ENCODE measurements at regions of chr16 and their contacts with region 1.

Region 1: GRCh38 chr16:74666425-74667254 is at the start of gene RFWD3:
- DNase-seq: peak; percentile 91 to 99 (median 94)
- ATAC-seq: peak; percentile 99
- H3K4me3 ChIP-seq: peak within 1 kb of the TSS; percentile 93
- H3K4me3 Mint-ChIP-seq: peak within 1 kb of the TSS; percentile 99
- H3K27ac ChIP-seq: peak within 1 kb of the TSS; percentile 69 to 72
- H3K27ac Mint-ChIP-seq: peak within 1 kb of the TSS; percentile 95
- H3K4me1 ChIP-seq: peaks cover 38% of the 10 kb centered on the region
- H3K4me1 Mint-ChIP-seq: peaks cover 44% of the 10 kb centered on the region
- H3K27me3 ChIP-seq: no peaks in the 10 kb centered on the region
- H3K27me3 Mint-ChIP-seq: no peaks in the 10 kb centered on the region
- CTCF ChIP-seq: no peak
- total RNA-seq, gene RFWD3: 44.9 to 47.0 TPM

Region 2: GRCh38 chr16:74372953-74373846 is 293.4 kb before region 1 on chr16:
- CTCF ChIA-PET with region 1: no interaction called
- POLR2A ChIA-PET with region 1: no interaction called
- intact Hi-C with region 1: loop called in 1 of 2 experiments (anchors 5 kb)
- DNase-seq: no peak
- ATAC-seq: no peak
- H3K4me3 ChIP-seq: no peak overlapping the region
- H3K4me3 Mint-ChIP-seq: no peak overlapping the region
- H3K27ac ChIP-seq: no peak overlapping the region
- H3K27ac Mint-ChIP-seq: peak overlapping the region; percentile 69
- H3K4me1 ChIP-seq: peaks cover 7% of the 10 kb centered on the region
- H3K4me1 Mint-ChIP-seq: peaks cover 8% of the 10 kb centered on the region
- H3K27me3 ChIP-seq: no peaks in the 10 kb centered on the region
- H3K27me3 Mint-ChIP-seq: no peaks in the 10 kb centered on the region
- CTCF ChIP-seq: no peak

Region 3: GRCh38 chr16:74521691-74522090 is 144.9 kb before region 1 on chr16:
- CTCF ChIA-PET with region 1: no interaction called
- POLR2A ChIA-PET with region 1: no interaction called
- intact Hi-C with region 1: no loop called
- DNase-seq: no peak
- ATAC-seq: no peak
- H3K4me3 ChIP-seq: no peak overlapping the region
- H3K4me3 Mint-ChIP-seq: no peak overlapping the region
- H3K27ac ChIP-seq: no peak overlapping the region
- H3K27ac Mint-ChIP-seq: peak overlapping the region; percentile 22
- H3K4me1 ChIP-seq: no peaks in the 10 kb centered on the region
- H3K4me1 Mint-ChIP-seq: peaks cover 54% of the 10 kb centered on the region
- H3K27me3 ChIP-seq: no peaks in the 10 kb centered on the region
- H3K27me3 Mint-ChIP-seq: no peaks in the 10 kb centered on the region
- CTCF ChIP-seq: no peak

Region 4: GRCh38 chr16:74563828-74564263 is 102.8 kb before region 1 on chr16:
- CTCF ChIA-PET with region 1: no interaction called
- POLR2A ChIA-PET with region 1: no interaction called
- intact Hi-C with region 1: no loop called
- DNase-seq: peak in 4 of 14 experiments; percentile 11 to 58 (median 35)
- ATAC-seq: no peak
- H3K4me3 ChIP-seq: no peak overlapping the region
- H3K4me3 Mint-ChIP-seq: peak overlapping the region; percentile 17
- H3K27ac ChIP-seq: no peak overlapping the region
- H3K27ac Mint-ChIP-seq: peak overlapping the region; percentile 87
- H3K4me1 ChIP-seq: peaks cover 45% of the 10 kb centered on the region
- H3K4me1 Mint-ChIP-seq: peaks cover 96% of the 10 kb centered on the region
- H3K27me3 ChIP-seq: no peaks in the 10 kb centered on the region
- H3K27me3 Mint-ChIP-seq: no peaks in the 10 kb centered on the region
- CTCF ChIP-seq: no peak

Region 5: GRCh38 chr16:74695450-74696422 is 29.1 kb after region 1 on chr16:
- CTCF ChIA-PET with region 1: interaction called, 4 read pairs
- POLR2A ChIA-PET with region 1: interaction called, 34 read pairs
- intact Hi-C with region 1: loop called (anchors 5 kb)
- DNase-seq: peak; percentile 24 to 89 (median 42)
- ATAC-seq: peak; percentile 73
- H3K4me3 ChIP-seq: peak overlapping the region; percentile 39
- H3K4me3 Mint-ChIP-seq: peak overlapping the region; percentile 89
- H3K27ac ChIP-seq: no peak overlapping the region
- H3K27ac Mint-ChIP-seq: peak overlapping the region; percentile 75
- H3K4me1 ChIP-seq: peaks cover 44% of the 10 kb centered on the region
- H3K4me1 Mint-ChIP-seq: peaks cover 71% of the 10 kb centered on the region
- H3K27me3 ChIP-seq: no peaks in the 10 kb centered on the region
- H3K27me3 Mint-ChIP-seq: no peaks in the 10 kb centered on the region
- CTCF ChIP-seq: no peak

Region 6: DNA sequence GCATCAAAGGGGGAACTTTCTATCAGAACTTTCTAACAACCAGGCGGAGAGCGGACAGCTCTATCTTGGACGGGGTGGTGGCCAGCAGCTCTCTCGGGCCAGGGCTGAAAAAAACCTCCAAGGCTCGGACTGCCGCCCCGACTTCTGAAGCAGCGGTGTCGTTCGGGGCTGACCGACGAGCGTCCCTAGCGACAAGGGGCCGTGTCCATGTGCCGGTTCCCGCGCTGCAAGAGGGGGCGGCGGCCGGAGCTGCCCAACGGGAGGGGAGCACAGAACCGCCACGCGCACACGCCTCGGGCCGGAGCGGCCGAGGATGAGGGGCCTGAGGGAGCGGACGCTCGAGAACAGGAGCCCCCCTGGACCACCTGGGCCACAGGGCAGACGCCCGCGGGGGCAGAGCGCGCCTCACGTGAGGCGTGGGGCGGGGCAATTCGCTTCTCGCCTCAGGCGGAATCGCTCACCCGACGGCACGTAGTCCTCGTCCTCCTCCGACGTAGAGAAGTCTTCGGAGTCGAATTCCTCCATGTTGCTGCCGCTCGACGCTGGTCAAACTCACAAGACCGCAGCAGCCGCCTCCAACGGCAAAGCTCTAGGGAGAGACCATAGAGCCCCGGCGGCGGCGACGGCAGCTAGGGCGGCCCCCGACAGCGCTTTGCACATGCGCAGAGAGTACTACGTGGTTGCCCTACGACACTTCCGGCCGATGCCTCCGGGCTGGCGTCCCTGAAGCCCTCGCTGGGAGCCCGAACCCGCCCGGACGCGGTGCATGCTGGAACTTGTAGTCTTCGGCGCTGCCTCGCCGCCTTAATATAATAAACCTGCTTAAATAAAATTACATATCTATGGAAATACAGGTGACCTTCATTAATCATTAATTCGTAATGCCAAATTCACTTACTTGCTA is 766.4 kb after region 1 on chr16 and contains the start of gene CFDP1:
- CTCF ChIA-PET with region 1: no interaction called
- POLR2A ChIA-PET with region 1: interaction called, 5 read pairs
- intact Hi-C with region 1: loop called in 1 of 2 experiments (anchors 10 kb)
- DNase-seq: peak; percentile 92 to 98 (median 94)
- ATAC-seq: peak; percentile 79
- H3K4me3 ChIP-seq: peak within 1 kb of the TSS; percentile 83
- H3K4me3 Mint-ChIP-seq: peak within 1 kb of the TSS; percentile 94
- H3K27ac ChIP-seq: peak within 1 kb of the TSS; percentile 96 to 97
- H3K27ac Mint-ChIP-seq: peak within 1 kb of the TSS; percentile 96
- H3K4me1 ChIP-seq: peaks cover 33% of the 10 kb centered on the region
- H3K4me1 Mint-ChIP-seq: peaks cover 28% of the 10 kb centered on the region
- H3K27me3 ChIP-seq: no peaks in the 10 kb centered on the region
- H3K27me3 Mint-ChIP-seq: no peaks in the 10 kb centered on the region
- CTCF ChIP-seq: no peak
- total RNA-seq, gene CFDP1: 23.0 to 25.5 TPM

Region 7: DNA sequence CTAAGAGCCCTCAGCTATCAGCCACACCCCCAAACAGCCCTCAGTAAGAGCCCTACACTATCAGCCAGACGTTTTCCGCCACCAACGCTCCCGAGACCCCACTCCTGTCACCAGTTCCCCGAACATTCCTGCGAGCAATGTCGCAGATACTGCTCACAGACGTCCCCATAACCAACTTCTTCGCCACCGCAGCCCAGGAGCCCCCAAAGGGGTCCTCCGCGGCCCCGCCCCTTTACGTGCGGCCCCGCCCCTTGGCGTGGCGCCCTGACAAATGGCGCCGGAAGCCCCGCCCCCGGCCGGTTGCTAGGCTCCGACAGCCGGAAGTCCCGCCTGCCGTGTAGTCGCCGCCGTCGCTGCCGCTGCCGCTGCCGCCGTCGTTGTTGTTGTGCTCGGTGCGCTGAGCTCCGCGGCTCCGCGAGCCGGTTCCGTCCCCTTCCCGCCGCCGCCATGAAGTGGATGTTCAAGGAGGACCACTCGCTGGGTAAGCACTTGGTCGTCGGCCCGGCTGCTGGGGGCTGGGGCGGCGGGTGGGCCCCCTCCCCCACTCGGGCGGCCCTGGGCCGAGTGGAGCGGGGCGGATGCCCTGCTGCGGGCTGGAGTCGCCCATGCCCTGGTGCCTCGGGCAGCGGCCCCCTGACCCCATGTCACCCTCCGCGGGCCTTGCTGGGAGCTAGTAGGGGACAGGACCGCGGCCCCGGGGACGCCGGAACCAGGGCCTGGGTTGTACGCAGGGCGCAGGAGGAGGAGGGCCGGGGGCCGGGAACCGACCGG is 899.6 kb after region 1 on chr16 and contains the start of gene GABARAPL2:
- CTCF ChIA-PET with region 1: no interaction called
- POLR2A ChIA-PET with region 1: interaction called, 4 read pairs
- intact Hi-C with region 1: loop called in 1 of 2 experiments (anchors 2 kb)
- DNase-seq: peak; percentile 83 to 95 (median 88)
- ATAC-seq: peak; percentile 75
- H3K4me3 ChIP-seq: peak within 1 kb of the TSS; percentile 90
- H3K4me3 Mint-ChIP-seq: peak within 1 kb of the TSS; percentile 94
- H3K27ac ChIP-seq: peak within 1 kb of the TSS; percentile 69 to 76
- H3K27ac Mint-ChIP-seq: peak within 1 kb of the TSS; percentile 89
- H3K4me1 ChIP-seq: peaks cover 41% of the 10 kb centered on the region
- H3K4me1 Mint-ChIP-seq: peaks cover 39% of the 10 kb centered on the region
- H3K27me3 ChIP-seq: no peaks in the 10 kb centered on the region
- H3K27me3 Mint-ChIP-seq: peaks cover 14% of the 10 kb centered on the region
- CTCF ChIP-seq: no peak
- total RNA-seq, gene GABARAPL2: 44.6 to 48.3 TPM

Measured in CD4-positive, alpha-beta T cell (primary cell).